ENCODE measurements at regions of chr11 and their contacts with region 1.

Region 1: DNA sequence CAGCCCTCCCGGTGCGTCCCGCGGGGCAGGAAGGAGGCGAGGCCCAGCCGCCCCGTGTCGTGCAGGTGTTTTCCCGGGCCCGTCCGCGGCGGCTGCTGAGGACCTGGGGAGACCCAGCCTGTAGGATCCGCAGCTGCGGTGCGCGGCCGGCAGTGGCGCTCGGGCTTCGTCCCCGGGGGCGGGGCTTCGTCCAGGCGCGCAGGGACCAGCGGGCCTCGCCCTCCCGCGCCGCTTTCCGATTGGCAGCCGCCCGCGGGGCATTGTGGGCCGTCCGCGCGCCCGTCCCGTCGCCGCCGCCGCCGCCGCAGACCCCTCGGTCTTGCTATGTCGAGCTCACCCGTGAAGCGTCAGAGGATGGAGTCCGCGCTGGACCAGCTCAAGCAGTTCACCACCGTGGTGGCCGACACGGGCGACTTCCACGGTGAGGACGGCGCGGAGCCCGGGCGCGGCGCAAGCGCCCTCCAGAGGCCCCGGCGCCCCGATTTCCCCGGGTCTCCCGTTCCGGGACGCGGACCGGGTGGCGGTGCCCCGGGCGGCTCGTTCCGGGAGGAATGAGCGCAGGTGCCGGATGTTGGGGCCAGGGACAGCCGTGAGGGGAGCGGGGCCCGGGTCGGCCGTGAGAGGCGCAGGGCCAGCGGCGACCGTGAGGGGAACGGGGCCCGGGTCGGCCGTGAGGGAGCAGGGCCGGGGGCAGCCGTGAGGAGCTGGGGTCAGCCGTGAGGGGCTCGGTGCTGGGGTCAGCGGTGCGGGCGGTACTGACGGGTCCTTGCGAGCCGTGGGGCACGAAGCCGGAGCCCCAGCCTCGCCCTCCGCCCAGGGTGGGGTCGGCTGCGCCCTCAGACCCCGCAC is at the start of gene TALDO1:
- DNase-seq: peak; percentile 30
- H3K4me3 ChIP-seq: peak within 1 kb of the TSS; percentile 93
- H3K27me3 ChIP-seq: no peaks in the 10 kb centered on the region
- CTCF ChIP-seq: 0 out of 2 replicates have a peak, but pooled peaks have one; percentile 8
- polyA plus RNA-seq, gene TALDO1: 209 and 278 TPM in 2 replicates

Region 2: DNA sequence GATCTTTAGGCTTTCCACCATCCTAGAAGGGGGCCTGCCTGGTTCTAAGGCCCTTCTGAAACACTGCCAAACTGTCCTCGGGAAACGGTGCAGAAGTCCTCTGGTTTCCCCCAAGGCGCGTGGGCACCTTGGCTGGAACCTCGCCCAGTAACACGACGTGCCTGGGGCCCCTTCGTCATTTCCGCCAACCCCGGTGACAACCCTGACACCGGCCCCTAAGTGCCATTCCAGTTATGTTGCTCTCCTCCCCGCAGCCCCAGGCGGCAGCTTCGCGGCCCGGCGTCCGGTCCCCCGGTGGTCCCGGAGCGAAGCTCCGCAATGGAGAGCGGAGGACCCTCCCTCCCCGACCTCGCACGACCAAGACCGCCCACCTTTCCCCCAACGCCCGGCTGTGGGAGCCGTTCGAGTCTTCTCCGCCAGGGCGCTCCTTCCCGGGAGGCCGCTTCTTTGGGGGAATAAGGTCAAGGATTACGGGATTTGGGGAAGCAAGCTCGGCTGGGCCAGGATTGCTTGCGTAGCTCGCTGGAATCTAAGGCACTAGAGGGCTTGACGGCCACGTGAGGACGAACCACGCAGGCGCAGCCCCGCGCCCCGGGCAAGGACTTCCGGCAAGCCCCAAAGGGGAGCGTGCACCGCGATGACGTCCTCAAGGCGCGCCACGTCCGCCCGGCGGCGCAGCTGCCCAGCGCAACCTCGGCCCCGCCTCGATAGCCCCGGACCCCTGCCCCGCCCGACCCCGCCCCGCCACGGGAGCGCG is 241.0 kb before region 1 on chr11:
- CTCF ChIA-PET with region 1: no interaction called
- POLR2A ChIA-PET with region 1: interaction called, 17 read pairs
- DNase-seq: peak; percentile 86
- H3K4me3 ChIP-seq: peak overlapping the region; percentile 96
- H3K27me3 ChIP-seq: no peaks in the 10 kb centered on the region
- CTCF ChIP-seq: 0 out of 2 replicates have a peak, but pooled peaks have one; percentile 4

Region 3: GRCh38 chr11:762421-763072 is 15.2 kb after region 1 on chr11:
- CTCF ChIA-PET with region 1: interaction called, 17 read pairs
- POLR2A ChIA-PET with region 1: no interaction called
- DNase-seq: no peak
- H3K4me3 ChIP-seq: no peak overlapping the region
- H3K27me3 ChIP-seq: no peaks in the 10 kb centered on the region
- CTCF ChIP-seq: peak; percentile 49

Region 4: GRCh38 chr11:798093-798713 is 50.8 kb after region 1 on chr11 and contains the start of gene SLC25A22:
- CTCF ChIA-PET with region 1: no interaction called
- POLR2A ChIA-PET with region 1: no interaction called
- DNase-seq: no peak
- H3K4me3 ChIP-seq: peak within 1 kb of the TSS; percentile 87
- H3K27me3 ChIP-seq: no peaks in the 10 kb centered on the region
- CTCF ChIP-seq: peak; percentile 45
- polyA plus RNA-seq, gene SLC25A22: 12.4 and 25.5 TPM in 2 replicates